Caco-2 (cell line): ENCODE measurements at regions of chr16 and their contacts with region 1.

Region 1: DNA sequence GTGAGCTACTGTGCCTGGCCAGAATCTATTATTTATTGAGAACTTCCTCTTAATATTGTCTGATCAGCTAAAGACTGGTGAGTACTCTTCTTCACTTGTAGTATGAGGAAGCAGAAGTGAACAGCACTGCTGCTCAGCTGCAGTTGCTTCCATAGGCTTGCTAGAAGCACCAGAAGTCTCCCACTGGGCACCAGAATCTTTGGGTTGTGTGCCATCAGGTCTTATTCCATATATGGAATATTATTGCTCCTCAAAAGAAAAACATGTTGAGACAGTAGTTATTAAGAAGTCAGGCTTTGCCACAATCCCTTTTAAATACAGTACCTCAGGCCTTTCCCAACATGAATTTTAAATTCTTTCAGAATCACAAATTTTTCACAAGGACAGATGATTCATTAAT is 17.2 kb downstream of the SNTB2 start:
- DNase-seq: no peak
- H3K4me3 ChIP-seq: no peak overlapping the region
- H3K4me3 Mint-ChIP-seq: no peak overlapping the region
- H3K27ac Mint-ChIP-seq: no peak overlapping the region
- H3K4me1 ChIP-seq: peaks cover 14% of the 10 kb centered on the region
- H3K4me1 Mint-ChIP-seq: peaks cover 25% of the 10 kb centered on the region
- H3K27me3 ChIP-seq: no peaks in the 10 kb centered on the region
- H3K27me3 Mint-ChIP-seq: no peaks in the 10 kb centered on the region
- CTCF ChIP-seq: no peak

Region 2: DNA sequence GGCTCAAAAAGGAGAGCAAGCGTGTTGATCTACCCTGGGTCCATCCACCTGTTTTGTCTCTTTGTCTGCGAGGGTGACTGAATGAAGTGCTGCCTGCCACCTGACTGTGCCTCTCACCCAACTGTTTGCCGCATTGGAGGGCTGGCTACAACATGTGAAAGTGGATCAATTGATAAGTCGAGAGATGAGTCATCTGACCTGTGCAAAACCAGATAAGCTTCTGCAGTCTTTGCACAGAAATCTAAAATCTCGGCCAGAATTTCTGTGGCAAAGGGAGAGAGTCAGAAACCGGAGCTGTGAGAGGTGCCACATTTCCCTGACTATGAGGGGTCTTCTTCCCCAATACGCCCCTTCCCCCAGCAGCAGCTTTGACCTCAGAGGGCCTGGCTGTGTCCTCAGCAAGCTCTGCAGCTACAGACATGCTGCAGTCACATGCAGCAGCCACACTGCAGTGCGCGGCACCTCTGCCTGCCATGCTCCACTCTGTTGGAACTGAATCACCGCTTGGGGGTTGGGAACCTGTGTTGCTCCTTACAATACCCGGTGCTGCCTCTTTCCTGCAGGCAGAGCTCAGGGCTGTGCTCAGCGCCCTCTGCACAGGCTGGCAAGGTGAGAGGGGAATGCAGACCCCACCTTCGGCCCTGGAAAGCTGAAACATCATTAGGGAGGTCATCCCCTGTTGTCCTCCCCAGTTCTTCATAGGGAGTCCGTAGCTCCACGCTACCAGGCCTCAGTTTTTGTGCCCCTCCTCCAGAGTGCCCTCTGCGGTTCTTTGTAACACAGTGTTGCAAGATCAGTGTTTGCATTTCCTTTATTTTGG is 114.9 kb before region 1 on chr16:
- CTCF ChIA-PET with region 1: no interaction called
- POLR2A ChIA-PET with region 1: no interaction called
- intact Hi-C with region 1: no loop called
- DNase-seq: no peak
- H3K4me3 ChIP-seq: no peak overlapping the region
- H3K4me3 Mint-ChIP-seq: no peak overlapping the region
- H3K27ac Mint-ChIP-seq: peak overlapping the region; percentile 10
- H3K4me1 ChIP-seq: peaks cover 12% of the 10 kb centered on the region
- H3K4me1 Mint-ChIP-seq: peaks cover 17% of the 10 kb centered on the region
- H3K27me3 ChIP-seq: no peaks in the 10 kb centered on the region
- H3K27me3 Mint-ChIP-seq: no peaks in the 10 kb centered on the region
- CTCF ChIP-seq: no peak

Region 3: DNA sequence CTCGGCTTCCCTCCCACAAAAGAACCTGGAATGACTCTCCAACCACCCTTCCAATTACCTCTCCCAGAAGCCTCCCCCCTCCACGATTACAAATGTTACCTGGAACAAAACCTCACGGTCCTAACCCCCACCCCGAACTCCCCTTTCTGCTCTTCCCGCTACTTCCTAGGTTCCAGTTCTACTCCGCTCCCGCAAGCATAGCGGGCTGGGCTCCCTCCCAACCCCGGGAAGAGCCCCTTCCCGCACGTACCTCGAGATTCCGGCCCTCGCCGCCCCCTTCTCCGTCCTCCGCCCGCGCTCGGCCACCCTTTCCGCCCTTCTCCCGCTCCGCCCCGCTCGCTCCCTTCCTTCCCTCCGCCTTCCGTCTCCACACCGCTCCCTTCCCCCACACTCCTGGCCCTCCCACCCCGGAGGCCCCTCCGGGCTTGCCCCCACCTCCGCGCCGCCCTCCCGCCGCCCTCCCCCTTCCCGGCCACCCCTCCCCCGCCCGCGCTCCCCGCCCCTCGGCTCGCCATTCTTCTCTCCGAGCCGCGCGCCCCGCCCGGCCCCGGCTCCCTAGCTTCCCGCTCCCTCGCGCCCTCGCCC is 72.2 kb before region 1 on chr16:
- CTCF ChIA-PET with region 1: no interaction called
- POLR2A ChIA-PET with region 1: interaction called, 21 read pairs
- intact Hi-C with region 1: no loop called
- DNase-seq: peak; percentile 93 to 95
- H3K4me3 ChIP-seq: peak overlapping the region; percentile 54
- H3K4me3 Mint-ChIP-seq: peak overlapping the region; percentile 96
- H3K27ac Mint-ChIP-seq: peak overlapping the region; percentile 92
- H3K4me1 ChIP-seq: peaks cover 14% of the 10 kb centered on the region; the same call in 1 of the 2 replicates
- H3K4me1 Mint-ChIP-seq: peaks cover 5% of the 10 kb centered on the region
- H3K27me3 ChIP-seq: no peaks in the 10 kb centered on the region
- H3K27me3 Mint-ChIP-seq: no peaks in the 10 kb centered on the region
- CTCF ChIP-seq: no peak

Region 4: GRCh38 chr16:69465083-69465721 is 261.0 kb after region 1 on chr16:
- CTCF ChIA-PET with region 1: no interaction called
- POLR2A ChIA-PET with region 1: no interaction called
- intact Hi-C with region 1: no loop called
- DNase-seq: peak; percentile 60 to 71
- H3K4me3 ChIP-seq: no peak overlapping the region
- H3K4me3 Mint-ChIP-seq: peak overlapping the region; percentile 57
- H3K27ac Mint-ChIP-seq: peak overlapping the region; percentile 76
- H3K4me1 ChIP-seq: peaks cover 50% of the 10 kb centered on the region
- H3K4me1 Mint-ChIP-seq: peaks cover 51% of the 10 kb centered on the region
- H3K27me3 ChIP-seq: no peaks in the 10 kb centered on the region
- H3K27me3 Mint-ChIP-seq: no peaks in the 10 kb centered on the region
- CTCF ChIP-seq: peak in 1 of 2 experiments; percentile 31